Activated naive CD4-positive, alpha-beta T cell treated with anti-CD3 and anti-CD28 coated beads for 36 hours (primary cell): ENCODE measurements at regions of chr15 and their contacts with region 1.

Region 1: GRCh38 chr15:63752075-63752684 is 81.6 kb downstream of the HERC1 start:
- DNase-seq: peak; percentile 60
- H3K4me3 Mint-ChIP-seq: no peak overlapping the region
- H3K27ac Mint-ChIP-seq: no peak overlapping the region
- H3K4me1 Mint-ChIP-seq: no peaks in the 10 kb centered on the region
- H3K27me3 Mint-ChIP-seq: no peaks in the 10 kb centered on the region

Region 2: GRCh38 chr15:64046347-64047153 is 294.4 kb after region 1 on chr15 and contains the start of gene DAPK2:
- CTCF ChIA-PET with region 1: interaction called, 32 read pairs
- intact Hi-C with region 1: loop called (anchors 1 kb)
- DNase-seq: peak; percentile 56
- H3K4me3 Mint-ChIP-seq: peak within 1 kb of the TSS; percentile 53
- H3K27ac Mint-ChIP-seq: no peak within 1 kb of the TSS
- H3K4me1 Mint-ChIP-seq: peaks cover 4% of the 10 kb centered on the region
- H3K27me3 Mint-ChIP-seq: peaks cover 10% of the 10 kb centered on the region
- total RNA-seq, gene DAPK2: 0.44 TPM in 1 of 2 experiments, not detected in the other